A549 (cell line): ENCODE measurements at regions of chr1 and their contacts with region 1.

Region 1: GRCh38 chr1:16181887-16182719 is 26.2 kb upstream of the EPHA2 start:
- DNase-seq: peak; percentile 61 to 93
- ATAC-seq: peak; percentile 93
- H3K4me3 ChIP-seq: no peak overlapping the region
- H3K27ac ChIP-seq: peak overlapping the region; percentile 96 to 97
- H3K4me1 ChIP-seq: peaks cover 84% of the 10 kb centered on the region
- CTCF ChIP-seq: no peak
- EP300 ChIP-seq: peak in 1 of 2 experiments; percentile 46; a peak in 1 of 5 replicates
- POLR2A ChIP-seq: peak; percentile 26; the same call in 1 of the 2 replicates
- RAD21 ChIP-seq: peak in 1 of 2 experiments; percentile 19; a peak in 1 of 5 replicates

Region 2: GRCh38 chr1:16146279-16147155 is 35.6 kb before region 1 on chr1:
- CTCF ChIA-PET with region 1: interaction called, 152 read pairs
- POLR2A ChIA-PET with region 1: interaction called, 10 read pairs
- DNase-seq: peak; percentile 82 to 87
- ATAC-seq: peak; percentile 36 to 49
- H3K4me3 ChIP-seq: peak overlapping the region; percentile 36
- H3K27ac ChIP-seq: peak overlapping the region; percentile 95 to 100
- H3K4me1 ChIP-seq: peaks cover 96% of the 10 kb centered on the region
- CTCF ChIP-seq: no peak
- EP300 ChIP-seq: peak; percentile 19 to 59; a peak in 3 of 5 replicates
- POLR2A ChIP-seq: no peak
- RAD21 ChIP-seq: no peak; a peak in 1 of 5 replicates

Region 3: GRCh38 chr1:16155532-16156410 is 26.3 kb before region 1 on chr1 and contains the start of gene EPHA2:
- CTCF ChIA-PET with region 1: interaction called, 152 read pairs
- POLR2A ChIA-PET with region 1: interaction called, 35 read pairs
- DNase-seq: peak; percentile 79 to 91
- ATAC-seq: peak; percentile 76 to 84
- H3K4me3 ChIP-seq: peak within 1 kb of the TSS; percentile 93
- H3K27ac ChIP-seq: peak within 1 kb of the TSS; percentile 97 to 100
- H3K4me1 ChIP-seq: peaks cover 44% of the 10 kb centered on the region
- CTCF ChIP-seq: no peak
- EP300 ChIP-seq: no peak
- POLR2A ChIP-seq: peak; percentile 93
- RAD21 ChIP-seq: peak in 1 of 2 experiments; percentile 16; a peak in 1 of 5 replicates
- polyA plus RNA-seq, gene EPHA2: 55.0 and 59.3 TPM in 2 replicates

Region 4: DNA sequence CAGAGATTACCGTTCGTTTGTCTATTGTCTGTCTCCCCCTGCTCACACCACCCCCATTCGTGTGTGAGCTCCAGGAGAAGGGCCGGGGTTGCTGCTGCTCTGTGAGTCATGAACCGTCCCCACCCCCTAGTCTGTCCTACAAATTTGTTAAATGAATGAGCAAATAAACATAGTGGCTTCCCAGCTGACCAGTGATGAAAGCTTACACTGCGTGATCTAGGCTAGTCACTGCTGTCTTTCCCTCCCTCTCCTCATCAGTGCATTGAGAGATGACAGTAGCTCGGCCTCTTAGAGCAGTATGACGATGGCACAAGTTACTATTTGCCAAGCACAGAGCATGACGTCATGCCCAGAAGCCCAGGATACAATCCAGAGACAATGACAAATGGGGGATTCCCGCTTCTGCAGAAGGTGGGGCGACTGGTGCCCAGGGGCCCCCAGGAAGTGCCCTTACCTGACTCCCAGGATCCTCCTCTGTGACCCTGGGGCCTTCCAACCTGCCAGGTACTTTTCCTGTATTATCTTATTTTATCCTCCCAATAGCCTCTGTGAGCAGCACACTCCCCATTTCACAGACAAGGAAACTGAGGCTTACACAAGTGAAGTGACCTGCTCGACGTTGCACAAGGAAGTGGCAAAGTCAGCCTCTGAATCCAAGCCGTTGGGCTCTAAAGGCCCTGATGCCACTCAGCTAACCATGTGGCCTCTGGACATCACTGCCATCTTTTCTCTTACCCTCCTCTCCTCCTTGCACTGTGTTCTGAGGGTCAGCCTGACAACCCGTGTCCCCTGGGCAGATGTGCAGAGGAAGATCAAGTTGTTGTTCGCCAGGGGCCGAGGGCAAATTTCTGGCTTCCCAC is 17.7 kb before region 1 on chr1:
- CTCF ChIA-PET with region 1: interaction called, 8 read pairs
- POLR2A ChIA-PET with region 1: interaction called, 13 read pairs
- DNase-seq: peak; percentile 80 to 95
- ATAC-seq: peak; percentile 79 to 86
- H3K4me3 ChIP-seq: no peak overlapping the region
- H3K27ac ChIP-seq: peak overlapping the region; percentile 81 to 97
- H3K4me1 ChIP-seq: peaks cover 73% of the 10 kb centered on the region
- CTCF ChIP-seq: no peak
- EP300 ChIP-seq: peak; percentile 34 to 64; a peak in 2 of 5 replicates
- POLR2A ChIP-seq: no peak
- RAD21 ChIP-seq: peak in 1 of 2 experiments; percentile 15; a peak in 2 of 5 replicates

Region 5: DNA sequence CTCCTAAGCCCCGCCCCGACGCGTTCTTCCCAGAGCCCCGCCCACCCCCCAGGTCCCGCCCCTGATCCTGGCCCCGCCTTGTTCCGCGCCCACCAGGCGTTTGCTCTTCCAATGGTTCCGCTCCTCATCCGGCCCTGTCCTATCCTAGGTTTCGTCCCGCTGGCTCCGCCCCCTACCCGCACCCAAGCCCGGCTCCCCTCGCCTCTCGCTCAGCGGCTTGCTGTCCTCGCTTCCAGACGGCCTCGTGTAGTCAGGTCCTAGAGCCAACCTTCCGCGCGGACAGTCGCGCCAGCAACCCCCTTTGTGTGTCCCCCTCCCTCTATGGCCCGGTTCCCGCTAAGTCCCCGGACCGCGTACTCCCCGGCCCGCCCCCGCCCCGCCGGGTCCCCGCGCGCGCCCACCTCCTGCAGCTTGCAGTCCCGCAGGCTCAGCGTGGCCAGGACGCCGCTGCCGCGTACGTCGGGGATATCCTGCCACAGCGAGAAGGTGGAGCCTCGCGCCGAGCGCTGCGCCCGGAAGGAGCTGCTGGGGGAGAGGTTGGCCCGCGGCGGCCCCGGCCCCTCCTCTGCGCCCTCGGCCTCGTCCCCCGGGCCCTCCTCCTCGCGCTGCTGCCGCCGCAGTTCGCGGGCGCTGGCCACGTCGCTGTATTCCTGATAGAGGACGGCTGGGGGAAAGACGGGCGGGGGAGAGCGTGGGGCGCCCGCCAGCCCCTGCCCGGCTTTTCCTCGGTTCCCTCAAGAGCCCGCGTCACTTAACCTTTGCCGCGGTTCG is 24.6 kb after region 1 on chr1:
- CTCF ChIA-PET with region 1: interaction called, 4 read pairs
- POLR2A ChIA-PET with region 1: interaction called, 10 read pairs
- DNase-seq: peak; percentile 76 to 97
- ATAC-seq: peak; percentile 92 to 95
- H3K4me3 ChIP-seq: peak overlapping the region; percentile 51
- H3K27ac ChIP-seq: peak overlapping the region; percentile 84 to 95
- H3K4me1 ChIP-seq: peaks cover 26% of the 10 kb centered on the region
- CTCF ChIP-seq: no peak
- EP300 ChIP-seq: no peak
- POLR2A ChIP-seq: peak; percentile 85
- RAD21 ChIP-seq: no peak